ENCODE measurements at regions of chr11 and their contacts with region 1.

Region 1: DNA sequence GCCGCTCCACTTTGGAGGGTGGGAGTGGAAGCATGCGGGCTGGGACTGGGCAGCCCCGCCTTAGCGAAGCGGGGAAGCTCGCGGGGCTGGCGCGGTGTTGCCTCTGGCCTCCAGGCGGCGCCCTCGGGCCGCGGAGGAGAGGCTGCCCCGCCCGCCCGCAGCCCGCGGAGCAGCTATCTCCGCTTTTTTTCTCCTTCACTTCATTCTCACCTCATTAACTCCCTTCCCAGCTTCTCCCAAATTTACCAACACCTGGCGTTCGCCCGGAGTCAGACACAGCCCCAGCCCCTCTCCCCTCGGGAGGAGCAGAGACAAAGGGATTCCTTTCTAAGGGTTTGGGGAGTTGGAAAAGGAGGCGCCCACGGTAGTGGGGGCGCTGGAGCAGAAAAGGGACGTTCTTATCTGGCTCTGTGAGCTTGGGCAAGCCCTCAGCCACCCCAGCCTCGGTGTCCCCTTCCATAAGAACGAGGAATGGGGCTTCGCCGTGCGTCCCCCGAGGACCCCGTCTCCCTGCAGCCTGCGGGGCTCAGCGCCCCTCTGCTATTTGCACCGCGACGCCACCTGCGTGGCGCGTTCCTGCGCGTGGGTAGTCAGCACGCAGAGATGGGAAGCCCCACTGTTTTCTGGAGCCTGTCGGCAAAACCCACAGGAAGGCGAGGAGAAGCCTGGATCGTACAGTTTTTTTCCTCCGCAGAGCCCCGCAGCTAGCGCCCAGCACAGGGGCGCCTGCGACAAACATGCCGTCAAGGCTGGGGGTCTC is 1.5 kb upstream of the WNT11 start:
- DNase-seq: peak; percentile 87 to 94
- ATAC-seq: peak; percentile 88
- H3K4me3 ChIP-seq: peak overlapping the region; percentile 15 to 27
- H3K27ac ChIP-seq: no peak overlapping the region
- H3K4me1 ChIP-seq: no peaks in the 10 kb centered on the region
- H3K27me3 ChIP-seq: no peaks in the 10 kb centered on the region

Region 2: DNA sequence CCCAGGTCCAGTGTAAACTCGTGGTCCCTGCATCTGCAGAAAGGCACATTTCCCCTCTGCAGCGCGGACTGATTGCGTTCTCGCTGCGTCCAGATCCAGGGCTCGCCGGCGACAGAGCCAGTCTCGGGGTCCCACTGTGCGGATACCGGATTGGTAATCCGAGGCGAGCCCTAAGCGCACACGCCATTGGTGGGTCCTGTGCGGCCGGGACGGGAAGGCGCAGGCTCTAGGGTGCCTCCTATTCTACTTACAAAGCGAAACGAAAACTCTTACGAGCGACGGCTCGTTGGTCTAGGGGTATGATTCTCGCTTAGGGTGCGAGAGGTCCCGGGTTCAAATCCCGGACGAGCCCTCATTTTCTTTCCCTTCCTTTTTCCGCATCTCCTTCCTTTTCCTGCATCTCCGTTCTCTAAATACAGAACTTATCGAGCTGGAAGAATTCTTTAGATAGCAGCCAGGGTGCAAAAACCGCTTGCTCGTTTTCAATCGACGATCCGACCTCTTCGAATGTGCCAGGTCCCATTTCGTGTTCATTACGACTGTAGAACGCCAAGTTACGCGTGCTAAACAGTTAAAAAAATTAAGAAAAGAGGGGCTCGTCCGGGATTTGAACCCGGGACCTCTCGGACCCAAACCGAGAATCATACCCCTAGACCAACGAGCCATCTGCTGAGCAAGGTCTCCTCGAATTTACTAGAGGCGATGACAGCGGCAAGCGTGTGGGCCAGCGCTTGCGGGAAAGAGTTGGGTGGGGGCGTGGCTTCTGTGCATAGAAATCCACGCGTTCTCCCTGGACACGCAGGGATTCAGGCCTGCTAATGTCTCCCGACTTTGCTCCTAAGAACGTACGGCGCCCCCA is 27.6 kb after region 1 on chr11:
- intact Hi-C with region 1: loop called (anchors 2 kb)
- DNase-seq: peak; percentile 93 to 95
- ATAC-seq: peak; percentile 92
- H3K4me3 ChIP-seq: peak overlapping the region; percentile 45 to 68
- H3K27ac ChIP-seq: peak overlapping the region in 1 of 2 donors; percentile 55
- H3K4me1 ChIP-seq: no peaks in the 10 kb centered on the region
- H3K27me3 ChIP-seq: no peaks in the 10 kb centered on the region

Region 3: GRCh38 chr11:76318744-76319384 is 111.0 kb after region 1 on chr11:
- intact Hi-C with region 1: loop called (anchors 2 to 5 kb)
- DNase-seq: peak; percentile 85 to 94
- ATAC-seq: peak; percentile 86
- H3K4me3 ChIP-seq: no peak overlapping the region
- H3K27ac ChIP-seq: no peak overlapping the region
- H3K4me1 ChIP-seq: no peaks in the 10 kb centered on the region
- H3K27me3 ChIP-seq: no peaks in the 10 kb centered on the region

Region 4: GRCh38 chr11:76444384-76445123 is 236.7 kb after region 1 on chr11 and contains the start of gene EMSY:
- intact Hi-C with region 1: loop called (anchors 5 kb)
- DNase-seq: peak; percentile 97 to 98
- ATAC-seq: peak; percentile 99
- H3K4me3 ChIP-seq: peak within 1 kb of the TSS; percentile 92 to 93
- H3K27ac ChIP-seq: peak within 1 kb of the TSS; percentile 44 to 76
- H3K4me1 ChIP-seq: no peaks in the 10 kb centered on the region
- H3K27me3 ChIP-seq: no peaks in the 10 kb centered on the region
- total RNA-seq, gene EMSY: 25.1 to 35.0 TPM

Region 5: GRCh38 chr11:76512851-76513653 is 305.2 kb after region 1 on chr11:
- intact Hi-C with region 1: loop called (anchors 2 to 5 kb)
- DNase-seq: no peak
- ATAC-seq: no peak
- H3K4me3 ChIP-seq: no peak overlapping the region
- H3K27ac ChIP-seq: no peak overlapping the region
- H3K4me1 ChIP-seq: peaks cover 0 to 2% of the 10 kb centered on the region in 2 donors
- H3K27me3 ChIP-seq: no peaks in the 10 kb centered on the region

Measured in aorta (tissue), 5 donors.